Lower leg skin (tissue), 4 donors: ENCODE measurements at regions of chr6 and their contacts with region 1.

Region 1: GRCh38 chr6:20534295-20535262 is at the start of gene CDKAL1:
- DNase-seq: peak; percentile 93 to 97
- H3K4me3 ChIP-seq: peak within 1 kb of the TSS; percentile 80
- CTCF ChIP-seq: no peak
- POLR2A ChIP-seq: no peak
- total RNA-seq, gene CDKAL1: 10.3 to 18.0 (median 11.6) TPM

Region 2: GRCh38 chr6:20092071-20092566 is 442.5 kb before region 1 on chr6:
- intact Hi-C with region 1: loop called (anchors 10 kb)
- DNase-seq: no peak
- H3K4me3 ChIP-seq: no peak overlapping the region
- CTCF ChIP-seq: peak in 1 of 3 donors; percentile 33
- POLR2A ChIP-seq: no peak

Region 3: DNA sequence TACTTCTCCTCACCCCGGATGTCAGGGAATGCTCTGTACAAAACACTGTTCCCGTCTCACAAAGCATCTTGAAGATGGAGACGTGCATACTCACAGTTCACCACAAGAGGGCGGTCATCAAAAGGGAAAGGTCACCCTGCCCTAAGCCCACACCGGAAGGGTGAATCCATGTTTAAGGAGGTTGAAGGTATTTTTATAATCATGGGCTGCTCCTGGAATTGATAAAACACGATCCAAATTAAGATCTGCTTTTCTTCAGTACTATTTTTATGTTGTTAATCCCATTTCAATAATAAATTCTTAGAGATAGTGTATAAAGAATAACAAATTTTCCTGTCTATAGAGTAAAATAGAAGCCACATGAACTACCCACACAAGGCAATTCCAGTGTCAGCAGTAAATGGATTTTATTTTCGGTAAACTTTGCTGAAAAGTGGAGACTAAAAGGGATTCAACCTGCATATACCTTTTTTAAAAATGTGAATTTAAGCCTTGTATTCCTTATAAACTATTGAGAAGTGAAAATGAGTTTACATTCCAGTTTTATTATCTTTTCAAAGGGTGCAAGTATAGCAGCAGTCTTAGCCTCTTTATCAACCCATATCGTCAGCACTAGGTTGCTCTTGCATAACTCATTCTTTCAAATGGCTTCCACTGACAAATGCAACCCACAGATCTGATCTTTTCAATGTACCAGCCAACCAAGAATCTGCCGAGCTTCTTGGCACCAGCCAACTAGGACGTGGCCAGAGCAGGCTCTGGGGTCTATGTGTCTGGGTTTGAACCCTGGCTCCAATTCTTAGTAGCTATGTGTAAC is 242.6 kb before region 1 on chr6:
- intact Hi-C with region 1: loop called (anchors 5 kb)
- DNase-seq: peak; percentile 84 to 94
- H3K4me3 ChIP-seq: no peak overlapping the region
- CTCF ChIP-seq: peak in 1 of 3 donors; percentile 80
- POLR2A ChIP-seq: no peak